CD8-positive, alpha-beta T cell (primary cell): ENCODE measurements at regions of chrX and their contacts with region 1.

Region 1: GRCh38 chrX:85516131-85516530 is 136.7 kb upstream of the POF1B start:
- DNase-seq: no peak
- ATAC-seq: no peak
- H3K4me3 ChIP-seq: no peak overlapping the region
- H3K4me3 Mint-ChIP-seq: no peak overlapping the region
- H3K27ac ChIP-seq: no peak overlapping the region
- H3K27ac Mint-ChIP-seq: no peak overlapping the region
- H3K4me1 ChIP-seq: no peaks in the 10 kb centered on the region
- H3K4me1 Mint-ChIP-seq: no peaks in the 10 kb centered on the region
- H3K27me3 ChIP-seq: no peaks in the 10 kb centered on the region
- H3K27me3 Mint-ChIP-seq: no peaks in the 10 kb centered on the region
- CTCF ChIP-seq: no peak

Region 2: GRCh38 chrX:85274333-85274732 is 241.8 kb before region 1 on chrX:
- CTCF ChIA-PET with region 1: no interaction called
- POLR2A ChIA-PET with region 1: no interaction called
- intact Hi-C with region 1: no loop called
- DNase-seq: no peak
- ATAC-seq: no peak
- H3K4me3 ChIP-seq: no peak overlapping the region
- H3K4me3 Mint-ChIP-seq: no peak overlapping the region
- H3K27ac ChIP-seq: no peak overlapping the region
- H3K27ac Mint-ChIP-seq: no peak overlapping the region
- H3K4me1 ChIP-seq: no peaks in the 10 kb centered on the region
- H3K4me1 Mint-ChIP-seq: no peaks in the 10 kb centered on the region
- H3K27me3 ChIP-seq: no peaks in the 10 kb centered on the region
- H3K27me3 Mint-ChIP-seq: no peaks in the 10 kb centered on the region
- CTCF ChIP-seq: no peak

Region 3: GRCh38 chrX:85499400-85499799 is 16.7 kb before region 1 on chrX:
- CTCF ChIA-PET with region 1: no interaction called
- POLR2A ChIA-PET with region 1: no interaction called
- intact Hi-C with region 1: no loop called
- DNase-seq: no peak
- ATAC-seq: no peak
- H3K4me3 ChIP-seq: no peak overlapping the region
- H3K4me3 Mint-ChIP-seq: no peak overlapping the region
- H3K27ac ChIP-seq: no peak overlapping the region
- H3K27ac Mint-ChIP-seq: no peak overlapping the region
- H3K4me1 ChIP-seq: no peaks in the 10 kb centered on the region
- H3K4me1 Mint-ChIP-seq: no peaks in the 10 kb centered on the region
- H3K27me3 ChIP-seq: no peaks in the 10 kb centered on the region
- H3K27me3 Mint-ChIP-seq: no peaks in the 10 kb centered on the region
- CTCF ChIP-seq: no peak

Region 4: GRCh38 chrX:85569686-85570085 is 53.6 kb after region 1 on chrX:
- CTCF ChIA-PET with region 1: no interaction called
- POLR2A ChIA-PET with region 1: no interaction called
- intact Hi-C with region 1: loop called in 1 of 2 experiments (anchors 10 kb)
- DNase-seq: no peak
- ATAC-seq: no peak
- H3K4me3 ChIP-seq: no peak overlapping the region
- H3K4me3 Mint-ChIP-seq: no peak overlapping the region
- H3K27ac ChIP-seq: no peak overlapping the region
- H3K27ac Mint-ChIP-seq: no peak overlapping the region
- H3K4me1 ChIP-seq: no peaks in the 10 kb centered on the region
- H3K4me1 Mint-ChIP-seq: no peaks in the 10 kb centered on the region
- H3K27me3 ChIP-seq: no peaks in the 10 kb centered on the region
- H3K27me3 Mint-ChIP-seq: no peaks in the 10 kb centered on the region
- CTCF ChIP-seq: no peak